CD4-positive, alpha-beta memory T cell (primary cell): ENCODE measurements at regions of chr2 and their contacts with region 1.

Region 1: DNA sequence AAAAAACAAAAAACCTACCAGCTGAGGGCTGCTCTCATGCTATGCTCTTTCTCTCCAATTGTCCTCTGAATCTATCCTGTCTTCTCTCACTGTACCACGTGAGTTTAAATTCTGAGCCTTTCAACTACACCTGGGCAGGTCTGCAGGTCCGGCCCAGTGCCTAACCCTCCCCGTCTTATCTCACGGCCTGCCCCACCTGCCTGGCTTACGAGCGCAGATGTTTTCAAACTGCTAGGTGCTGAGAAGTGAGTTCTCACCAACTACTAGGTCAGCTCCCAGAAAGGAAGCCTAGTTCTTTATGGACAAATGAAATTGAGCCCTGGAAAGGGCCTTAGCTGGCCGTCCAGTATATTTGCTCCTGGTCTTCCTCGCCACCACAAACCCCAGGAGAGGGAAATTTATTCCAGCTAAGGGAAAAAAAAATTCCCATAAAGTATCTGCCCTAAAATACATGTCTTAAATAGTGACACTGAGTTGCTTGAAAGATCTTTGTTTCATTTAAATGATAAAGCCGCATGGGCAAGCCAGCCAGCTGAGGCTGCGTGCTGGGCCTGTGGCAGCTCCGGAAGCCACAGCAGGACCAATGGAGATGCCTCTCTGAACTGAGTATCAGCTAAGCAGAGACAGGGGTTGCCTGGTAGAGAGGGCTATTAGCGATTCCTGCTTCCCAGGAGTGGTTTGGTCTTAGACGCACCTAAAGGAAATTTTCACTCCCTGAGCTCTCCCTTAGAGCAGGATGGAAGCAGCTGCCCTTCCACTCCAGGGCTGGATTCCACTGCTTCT is 92.5 kb upstream of the NCK2 start:
- DNase-seq: no peak
- H3K4me3 ChIP-seq: no peak overlapping the region
- H3K4me3 Mint-ChIP-seq: no peak overlapping the region
- H3K27ac ChIP-seq: no peak overlapping the region
- H3K27ac Mint-ChIP-seq: peak overlapping the region in 1 of 7 donors; percentile 69
- H3K4me1 ChIP-seq: no peaks in the 10 kb centered on the region
- H3K4me1 Mint-ChIP-seq: peaks cover 0 to 1% (median 0%) of the 10 kb centered on the region in 4 donors
- H3K27me3 ChIP-seq: no peaks in the 10 kb centered on the region
- H3K27me3 Mint-ChIP-seq: no peaks in the 10 kb centered on the region

Region 2: GRCh38 chr2:105604938-105605337 is 47.3 kb before region 1 on chr2:
- CTCF ChIA-PET with region 1: no interaction called
- POLR2A ChIA-PET with region 1: no interaction called
- intact Hi-C with region 1: loop called (anchors 10 kb)
- DNase-seq: no peak
- H3K4me3 ChIP-seq: no peak overlapping the region
- H3K4me3 Mint-ChIP-seq: no peak overlapping the region
- H3K27ac ChIP-seq: no peak overlapping the region
- H3K27ac Mint-ChIP-seq: peak overlapping the region in 1 of 7 donors; percentile 58
- H3K4me1 ChIP-seq: no peaks in the 10 kb centered on the region
- H3K4me1 Mint-ChIP-seq: no peaks in the 10 kb centered on the region
- H3K27me3 ChIP-seq: no peaks in the 10 kb centered on the region
- H3K27me3 Mint-ChIP-seq: no peaks in the 10 kb centered on the region